Activated T-helper 2 cell treated with anti-CD3 and anti-CD28 coated beads, Interferon-gamma antibody, Interleukin-2, Interleukin-4, amounts not matched to agents 10 μg/mL and 5 μg/mL and 100 μg/mL, durations not matched to agents 14 hours and 24 hours and 36 hours (primary cell): ENCODE measurements at regions of chr18 and their contacts with region 1.

Region 1: DNA sequence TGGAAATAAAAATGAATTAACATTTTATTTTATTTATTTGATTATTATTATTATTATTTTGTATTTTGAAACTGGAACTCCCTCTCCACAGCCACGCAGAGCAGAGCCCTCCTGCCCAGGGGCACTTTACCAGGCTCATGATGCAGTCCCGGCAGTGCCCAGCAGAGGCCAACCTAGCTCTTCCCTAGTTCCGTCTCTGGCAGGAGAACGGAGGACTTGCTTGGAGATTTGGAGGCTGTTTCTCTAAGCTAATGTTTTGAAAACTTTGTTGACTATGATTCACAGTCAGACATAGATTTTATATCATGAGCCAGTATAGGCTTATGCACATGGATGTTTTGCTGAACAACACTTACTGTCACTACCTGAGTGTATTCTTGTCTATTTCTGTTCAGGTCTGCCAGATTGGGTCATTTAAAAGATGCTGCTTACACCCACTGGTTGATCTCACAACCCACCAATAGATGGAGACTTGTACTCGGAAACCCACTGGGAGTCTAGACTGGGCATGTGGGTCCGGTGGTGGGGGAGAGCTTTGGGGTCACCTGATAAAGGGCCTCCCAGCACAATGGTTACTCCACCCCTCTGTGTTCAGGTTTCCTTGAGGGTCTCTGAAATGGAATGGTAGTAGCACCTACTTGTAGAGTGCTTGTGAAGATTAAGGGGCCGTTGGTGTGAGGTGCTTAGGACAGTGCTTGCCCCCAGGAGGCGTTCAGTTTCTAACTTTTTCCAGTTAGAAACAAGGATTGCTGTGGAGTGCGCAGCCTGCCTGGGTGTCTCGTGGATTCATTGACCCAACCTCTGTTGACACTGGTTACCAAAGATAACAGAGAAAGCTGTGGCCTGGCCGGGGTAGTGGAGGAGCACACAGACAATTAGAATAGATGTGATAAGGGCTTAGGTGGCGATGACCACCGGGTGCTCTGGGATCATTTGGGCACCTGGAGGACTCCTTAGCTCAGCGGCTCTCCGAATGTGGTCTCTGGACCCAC is 177.3 kb downstream of the HAUS1 start:
- DNase-seq: peak; percentile 46
- H3K4me3 Mint-ChIP-seq: no peak overlapping the region
- H3K27ac Mint-ChIP-seq: no peak overlapping the region
- H3K4me1 Mint-ChIP-seq: peaks cover 11% of the 10 kb centered on the region
- H3K27me3 Mint-ChIP-seq: no peaks in the 10 kb centered on the region

Region 2: GRCh38 chr18:46067431-46068007 is 214.0 kb before region 1 on chr18:
- intact Hi-C with region 1: no loop called
- DNase-seq: no peak
- H3K4me3 Mint-ChIP-seq: no peak overlapping the region
- H3K27ac Mint-ChIP-seq: no peak overlapping the region
- H3K4me1 Mint-ChIP-seq: peaks cover 39% of the 10 kb centered on the region
- H3K27me3 Mint-ChIP-seq: no peaks in the 10 kb centered on the region

Region 3: GRCh38 chr18:46481048-46481846 is 199.8 kb after region 1 on chr18:
- intact Hi-C with region 1: loop called (anchors 2 kb)
- DNase-seq: peak; percentile 33
- H3K4me3 Mint-ChIP-seq: no peak overlapping the region
- H3K27ac Mint-ChIP-seq: no peak overlapping the region
- H3K4me1 Mint-ChIP-seq: no peaks in the 10 kb centered on the region
- H3K27me3 Mint-ChIP-seq: peaks cover 3% of the 10 kb centered on the region